ENCODE measurements at regions of chr2 and their contacts with region 1.

Region 1: GRCh38 chr2:161063157-161063954 is 96.9 kb upstream of the TANK start:
- DNase-seq: peak; percentile 74
- ATAC-seq: peak; percentile 98
- H3K4me3 ChIP-seq: no peak overlapping the region
- H3K27ac ChIP-seq: no peak overlapping the region
- H3K4me1 ChIP-seq: peaks cover 8% of the 10 kb centered on the region; the same call in 1 of the 2 replicates
- H3K27me3 ChIP-seq: no peaks in the 10 kb centered on the region
- CTCF ChIP-seq: peak; percentile 91
- EP300 ChIP-seq: no peak
- POLR2A ChIP-seq: no peak
- RAD21 ChIP-seq: peak; percentile 62

Region 2: DNA sequence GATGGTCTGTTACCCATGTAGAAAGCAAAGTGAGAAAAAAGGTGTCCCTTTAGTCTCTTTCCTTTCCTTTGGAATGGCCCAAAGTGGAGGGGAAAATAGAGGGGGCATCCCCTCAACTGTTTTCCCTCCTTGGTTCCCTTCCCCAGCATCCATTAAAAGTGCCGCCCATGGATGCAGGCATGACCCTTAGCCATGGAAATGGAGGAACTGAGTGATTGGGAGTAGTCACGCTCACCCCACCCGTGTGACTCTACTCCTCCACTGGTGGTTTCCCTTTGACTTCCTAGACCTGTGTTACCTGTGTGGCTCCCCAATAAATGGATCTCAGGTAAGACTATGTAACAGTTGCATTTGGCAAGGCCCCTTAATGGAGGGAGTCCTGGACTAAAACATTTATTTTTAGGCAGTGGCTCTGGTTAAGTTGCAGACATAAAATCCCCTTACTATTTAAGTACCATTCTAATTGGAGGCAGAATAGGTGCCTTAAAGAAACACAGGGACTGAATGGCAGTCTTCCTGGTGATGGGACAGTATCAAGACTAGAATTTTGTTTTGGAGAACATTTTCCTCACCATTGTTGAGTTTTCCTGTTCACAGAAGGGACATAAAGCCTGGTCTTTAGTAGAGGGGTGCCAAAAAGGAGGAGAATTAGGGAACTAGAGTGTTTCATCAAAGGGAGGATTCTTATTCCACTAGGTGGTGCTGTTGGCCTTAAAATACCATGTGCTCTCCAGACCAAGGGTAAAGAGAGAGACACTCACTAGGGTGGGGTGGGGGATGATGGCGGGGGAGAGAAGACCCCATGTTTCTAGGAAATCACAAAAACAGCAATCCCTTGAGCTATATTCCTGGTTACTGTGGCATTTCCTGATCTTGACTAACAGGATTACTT is 975.3 kb before region 1 on chr2:
- CTCF ChIA-PET with region 1: interaction called, 4 read pairs
- POLR2A ChIA-PET with region 1: no interaction called
- in situ Hi-C with region 1: no loop called
- intact Hi-C with region 1: loop called (anchors 1 kb)
- DNase-seq: peak; percentile 30
- ATAC-seq: peak; percentile 83
- H3K4me3 ChIP-seq: no peak overlapping the region
- H3K27ac ChIP-seq: no peak overlapping the region
- H3K4me1 ChIP-seq: no peaks in the 10 kb centered on the region
- H3K27me3 ChIP-seq: no peaks in the 10 kb centered on the region; a peak in 1 of 5 replicates
- CTCF ChIP-seq: peak; percentile 54
- EP300 ChIP-seq: no peak
- POLR2A ChIP-seq: no peak
- RAD21 ChIP-seq: no peak; the same call in 1 of the 2 replicates

Region 3: DNA sequence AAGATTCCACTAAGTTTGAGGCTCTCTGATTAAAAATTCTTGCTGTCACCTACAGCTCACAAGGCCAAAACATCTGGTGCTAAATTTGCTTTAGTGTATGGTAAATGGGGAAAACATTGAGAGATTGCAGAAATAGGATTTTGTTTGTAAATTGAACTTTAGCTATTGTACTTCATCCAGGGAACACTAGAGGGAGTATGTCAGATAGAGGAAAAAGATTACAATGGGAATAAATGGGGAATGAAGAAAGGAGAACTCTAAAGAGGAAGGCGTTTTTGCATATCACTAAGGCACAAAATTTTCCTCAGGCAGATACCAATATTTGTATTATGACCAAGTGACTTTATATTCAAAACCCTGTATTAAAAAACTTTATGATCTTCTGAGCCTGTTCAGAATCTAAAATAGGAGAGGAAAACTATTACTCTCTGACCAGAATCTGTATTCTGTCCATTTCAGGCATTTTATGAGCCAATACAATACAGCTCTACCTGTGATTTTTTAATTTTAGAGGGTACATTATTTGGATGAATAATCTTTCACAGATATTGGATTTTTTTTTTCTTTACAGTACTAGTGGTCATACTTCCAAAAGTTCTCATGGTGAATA is 811.0 kb before region 1 on chr2:
- CTCF ChIA-PET with region 1: no interaction called
- POLR2A ChIA-PET with region 1: no interaction called
- in situ Hi-C with region 1: no loop called
- intact Hi-C with region 1: loop called (anchors 2 kb)
- DNase-seq: peak; percentile 22
- ATAC-seq: peak; percentile 41; the same call in 2 of the 3 replicates
- H3K4me3 ChIP-seq: no peak overlapping the region
- H3K27ac ChIP-seq: no peak overlapping the region
- H3K4me1 ChIP-seq: no peaks in the 10 kb centered on the region
- H3K27me3 ChIP-seq: no peaks in the 10 kb centered on the region
- CTCF ChIP-seq: peak; percentile 73
- EP300 ChIP-seq: no peak
- POLR2A ChIP-seq: no peak
- RAD21 ChIP-seq: no peak

Measured in HepG2 (cell line).